Activated T-helper 1 cell treated with anti-CD3 and anti-CD28 coated beads, Interleukin-12 subunit alpha, Interleukin-12 subunit beta, Interleukin-2, Interleukin-4 antibody, amounts not matched to agents 30 ng/mL and 10 ng/mL and 1 ng/mL, durations not matched to agents 14 hours and 24 hours and 36 hours (primary cell): ENCODE measurements at regions of chr19 and their contacts with region 1.

Region 1: GRCh38 chr19:50933640-50934039 is 19.2 kb downstream of the KLK5 start:
- DNase-seq: no peak
- H3K4me3 Mint-ChIP-seq: no peak overlapping the region
- H3K27ac Mint-ChIP-seq: no peak overlapping the region
- H3K4me1 Mint-ChIP-seq: peaks cover 6% of the 10 kb centered on the region
- H3K27me3 Mint-ChIP-seq: no peaks in the 10 kb centered on the region

Region 2: GRCh38 chr19:51097166-51097738 is 163.6 kb after region 1 on chr19:
- intact Hi-C with region 1: loop called (anchors 2 kb)
- DNase-seq: peak; percentile 27
- H3K4me3 Mint-ChIP-seq: no peak overlapping the region
- H3K27ac Mint-ChIP-seq: peak overlapping the region; percentile 16
- H3K4me1 Mint-ChIP-seq: peaks cover 14% of the 10 kb centered on the region
- H3K27me3 Mint-ChIP-seq: no peaks in the 10 kb centered on the region

Region 3: DNA sequence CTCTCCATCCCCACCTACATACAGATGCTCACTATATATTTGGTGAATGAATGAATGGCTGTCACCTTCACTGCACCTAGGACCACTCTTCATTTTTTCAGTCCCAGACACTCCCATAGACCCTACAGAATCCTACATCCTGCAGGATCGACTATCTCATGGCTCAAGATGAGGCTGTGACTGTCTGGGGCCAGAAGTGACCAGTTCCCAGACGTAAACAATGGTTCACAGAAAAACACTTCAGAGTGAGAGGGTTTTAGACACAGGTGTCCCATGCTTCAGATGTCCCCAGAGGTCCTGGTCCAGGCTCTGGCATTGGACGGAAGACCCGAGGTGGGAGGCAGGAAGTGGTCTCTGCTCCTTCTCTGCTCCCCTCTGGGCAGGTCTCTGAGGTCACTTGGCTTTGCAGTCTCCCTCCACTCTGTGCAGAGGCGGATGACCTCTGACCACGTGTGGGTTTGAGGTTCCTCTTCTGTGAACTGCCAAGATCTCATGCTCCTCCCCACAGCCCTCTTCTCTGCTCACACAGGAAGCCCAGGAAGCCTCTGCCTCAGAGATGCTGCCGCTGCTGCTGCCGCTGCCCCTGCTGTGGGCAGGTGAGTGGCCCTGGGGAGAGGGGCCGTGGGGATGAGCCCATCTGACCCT is 233.3 kb after region 1 on chr19:
- intact Hi-C with region 1: loop called (anchors 5 kb)
- DNase-seq: peak; percentile 28
- H3K4me3 Mint-ChIP-seq: peak overlapping the region; percentile 68
- H3K27ac Mint-ChIP-seq: no peak overlapping the region
- H3K4me1 Mint-ChIP-seq: peaks cover 36% of the 10 kb centered on the region
- H3K27me3 Mint-ChIP-seq: peaks cover 20% of the 10 kb centered on the region

Region 4: GRCh38 chr19:51514866-51515481 is 581.3 kb after region 1 on chr19:
- intact Hi-C with region 1: no loop called
- DNase-seq: peak; percentile 15
- H3K4me3 Mint-ChIP-seq: no peak overlapping the region
- H3K27ac Mint-ChIP-seq: no peak overlapping the region
- H3K4me1 Mint-ChIP-seq: peaks cover 17% of the 10 kb centered on the region
- H3K27me3 Mint-ChIP-seq: peaks cover 26% of the 10 kb centered on the region